Common myeloid progenitor, CD34-positive (primary cell): ENCODE measurements at regions of chr21 and their contacts with region 1.

Region 1: DNA sequence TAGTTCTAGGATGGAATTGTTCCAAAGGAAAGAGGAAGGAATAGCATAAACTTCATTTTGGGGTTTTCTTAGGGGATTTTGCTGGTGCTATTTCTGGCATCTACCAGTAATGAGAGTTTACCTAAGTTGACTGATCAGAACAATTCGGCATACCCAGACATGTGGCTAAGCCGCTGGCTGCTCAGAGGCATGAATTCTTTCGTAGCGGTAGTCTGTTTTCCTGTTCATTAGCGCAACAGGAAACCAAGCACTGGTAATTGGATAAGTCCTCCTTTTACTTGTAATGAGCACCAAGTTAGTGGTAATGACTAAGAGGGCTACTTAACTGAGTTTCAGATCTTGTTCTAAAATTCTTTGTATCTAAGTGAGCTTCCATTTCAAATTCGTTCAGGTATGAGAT is 38.6 kb downstream of the C21orf91 start:
- DNase-seq: peak in 2 of 3 donors; percentile 80 to 81
- H3K4me3 ChIP-seq: peak overlapping the region in 2 of 7 experiments; percentile 37 to 47
- H3K27ac ChIP-seq: no peak overlapping the region
- H3K4me1 ChIP-seq: peaks cover 32 to 66% (median 48%) of the 10 kb centered on the region in 4 experiments
- H3K27me3 ChIP-seq: no peaks in the 10 kb centered on the region

Region 2: DNA sequence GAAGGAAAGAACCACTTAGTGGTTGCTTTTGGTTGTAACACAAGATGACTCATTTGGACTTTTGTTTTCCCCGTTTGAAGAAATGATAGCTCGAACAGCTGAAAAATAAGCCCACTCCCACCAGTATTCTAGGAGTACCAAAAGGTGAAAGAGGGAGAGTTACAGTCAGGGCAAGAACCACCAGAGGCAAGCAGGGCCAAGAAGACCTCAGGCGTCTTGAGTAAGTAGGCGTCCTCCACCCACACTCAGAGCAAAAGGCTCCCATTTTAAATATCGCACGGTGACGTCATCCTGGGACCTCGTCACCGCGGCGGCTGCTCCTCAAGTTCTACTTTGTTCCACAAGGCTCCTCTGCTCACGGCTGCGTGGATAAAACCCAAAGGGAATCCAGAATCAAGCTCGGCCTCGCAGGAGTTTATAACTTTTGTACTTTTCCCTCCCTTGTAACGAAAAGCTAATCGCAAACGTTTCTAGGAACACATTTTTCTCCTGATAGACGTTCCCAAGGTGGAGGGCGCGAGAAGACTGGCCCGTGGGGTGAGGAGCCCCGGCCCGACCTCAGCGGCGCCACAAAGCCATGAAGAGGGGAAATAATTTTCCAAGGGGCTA is 169.0 kb before region 1 on chr21:
- CTCF ChIA-PET with region 1: no interaction called
- POLR2A ChIA-PET with region 1: no interaction called
- DNase-seq: peak; percentile 92 to 96 (median 95)
- H3K4me3 ChIP-seq: peak overlapping the region; percentile 63 to 95 (median 89)
- H3K27ac ChIP-seq: peak overlapping the region; percentile 48 to 87
- H3K4me1 ChIP-seq: peaks cover 4 to 18% (median 13%) of the 10 kb centered on the region in 4 experiments
- H3K27me3 ChIP-seq: no peaks in the 10 kb centered on the region

Region 3: DNA sequence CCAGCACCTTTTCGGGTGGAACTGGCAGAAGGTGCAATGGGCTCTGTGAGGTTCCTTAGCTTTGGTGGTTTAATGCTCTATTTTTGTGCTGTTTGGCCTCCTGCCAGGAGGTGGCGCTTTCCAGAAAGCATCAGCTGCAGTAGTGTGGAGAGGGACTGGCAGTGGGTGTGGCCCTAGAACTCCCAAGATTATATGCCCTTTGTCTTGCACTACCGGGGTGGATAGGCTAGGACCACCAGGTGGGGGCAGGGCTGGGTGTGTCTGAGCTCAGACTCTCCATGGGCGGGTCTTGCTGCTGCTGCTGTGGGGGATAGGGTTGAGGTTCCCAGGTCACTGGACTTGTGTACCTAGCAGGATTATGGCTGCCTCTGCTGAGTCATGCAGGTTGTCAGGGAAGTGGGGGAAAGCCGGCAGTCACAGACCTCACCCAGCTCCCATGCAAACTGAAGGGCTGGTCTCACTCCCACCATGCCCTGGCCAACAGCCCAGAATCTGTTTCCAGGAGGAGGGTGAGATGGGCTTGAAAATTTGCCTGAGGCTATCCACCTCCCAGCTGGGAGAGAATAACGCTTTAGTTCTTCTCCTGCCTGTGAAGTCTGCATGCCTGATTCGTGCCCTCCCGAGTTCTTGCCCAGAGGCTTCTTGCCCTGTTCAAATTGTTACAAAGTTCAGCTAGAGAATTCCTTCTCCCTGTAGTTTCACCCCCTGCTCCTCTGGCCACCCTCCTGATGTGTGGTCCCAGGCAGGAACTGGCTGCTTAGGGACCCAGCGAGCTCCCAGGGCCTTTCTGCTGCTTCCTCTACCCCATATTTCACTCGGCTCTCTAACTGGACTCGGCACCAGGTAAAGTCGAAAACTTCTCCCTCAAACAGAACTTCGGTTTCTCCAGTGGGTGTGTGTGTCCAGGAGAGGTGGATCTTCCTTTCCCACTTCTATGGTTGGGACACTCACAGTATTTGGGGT is 91.3 kb before region 1 on chr21:
- CTCF ChIA-PET with region 1: interaction called, 10 read pairs
- POLR2A ChIA-PET with region 1: no interaction called
- DNase-seq: peak; percentile 34 to 81 (median 80)
- H3K4me3 ChIP-seq: peak overlapping the region in 3 of 7 experiments; percentile 8 to 64 (median 52)
- H3K27ac ChIP-seq: peak overlapping the region in 1 of 2 experiments; percentile 49
- H3K4me1 ChIP-seq: peaks cover 0 to 22% (median 9%) of the 10 kb centered on the region in 4 experiments
- H3K27me3 ChIP-seq: no peaks in the 10 kb centered on the region

Region 4: GRCh38 chr21:17793246-17794123 is 12.9 kb after region 1 on chr21:
- CTCF ChIA-PET with region 1: interaction called, 14 read pairs
- POLR2A ChIA-PET with region 1: no interaction called
- DNase-seq: peak in 2 of 3 donors; percentile 65 to 78
- H3K4me3 ChIP-seq: peak overlapping the region in 6 of 7 experiments; percentile 38 to 80 (median 56)
- H3K27ac ChIP-seq: peak overlapping the region; percentile 69 to 82
- H3K4me1 ChIP-seq: peaks cover 23 to 72% (median 39%) of the 10 kb centered on the region in 4 experiments
- H3K27me3 ChIP-seq: no peaks in the 10 kb centered on the region

Region 5: DNA sequence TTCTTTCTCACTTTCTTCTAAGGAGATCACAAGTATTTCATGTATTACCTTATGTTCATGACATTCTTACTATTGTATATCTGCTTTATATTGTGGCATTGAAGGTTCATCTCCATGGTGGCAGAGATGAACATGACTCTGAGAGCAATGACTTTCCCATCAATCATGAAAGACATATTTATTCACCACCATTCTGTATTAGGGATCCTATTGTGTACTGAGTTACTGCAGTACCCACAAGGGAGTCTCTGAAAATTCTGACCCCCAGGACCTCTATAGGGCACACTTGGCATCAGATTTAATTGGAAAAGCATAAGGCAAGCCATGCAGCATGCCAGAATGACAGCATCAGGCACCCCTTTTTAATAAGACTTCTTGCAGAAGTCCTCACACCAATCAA is 60.6 kb after region 1 on chr21:
- CTCF ChIA-PET with region 1: no interaction called
- POLR2A ChIA-PET with region 1: no interaction called
- DNase-seq: no peak
- H3K4me3 ChIP-seq: no peak overlapping the region
- H3K27ac ChIP-seq: no peak overlapping the region
- H3K4me1 ChIP-seq: no peaks in the 10 kb centered on the region
- H3K27me3 ChIP-seq: no peaks in the 10 kb centered on the region

Region 6: GRCh38 chr21:17853393-17854275 is 73.1 kb after region 1 on chr21:
- CTCF ChIA-PET with region 1: no interaction called
- POLR2A ChIA-PET with region 1: no interaction called
- DNase-seq: no peak
- H3K4me3 ChIP-seq: no peak overlapping the region
- H3K27ac ChIP-seq: no peak overlapping the region
- H3K4me1 ChIP-seq: no peaks in the 10 kb centered on the region
- H3K27me3 ChIP-seq: no peaks in the 10 kb centered on the region